HCT116 (cell line): ENCODE measurements at regions of chr7 and their contacts with region 1.

Region 1: DNA sequence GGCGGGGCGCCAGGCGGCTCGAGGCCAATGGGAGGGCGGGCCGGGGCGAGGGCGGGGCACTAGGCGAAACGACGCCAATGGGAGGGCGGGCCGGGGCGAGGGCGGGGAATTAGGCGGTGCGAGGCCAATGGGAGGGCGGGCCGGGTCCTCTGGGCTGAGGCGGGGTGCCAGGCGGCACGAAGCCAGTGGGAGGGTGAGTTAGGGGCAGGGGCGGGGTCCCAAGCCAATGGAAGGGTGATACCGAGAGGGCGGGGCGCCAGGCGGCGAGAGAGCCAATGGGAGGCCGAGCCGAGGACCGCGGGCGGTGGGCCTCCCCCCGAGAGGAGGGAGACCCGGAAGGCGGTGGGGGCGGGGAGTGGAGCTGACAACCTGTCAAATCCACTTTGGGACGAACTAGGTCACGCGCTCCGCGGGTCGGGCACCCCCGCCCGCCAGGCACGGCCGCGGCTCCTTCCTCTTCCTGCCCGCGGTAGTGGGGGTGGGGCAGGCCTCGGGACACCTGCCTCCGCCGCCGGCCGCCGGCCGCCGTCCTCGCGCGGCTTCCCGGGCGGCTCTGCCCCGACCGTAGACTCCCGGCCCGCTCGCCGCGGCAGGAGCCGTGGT is 28.0 kb upstream of the KMT2C start:
- DNase-seq: peak; percentile 96
- ATAC-seq: peak; percentile 89
- H3K4me3 ChIP-seq: peak overlapping the region; percentile 72 to 85
- H3K27ac ChIP-seq: peak overlapping the region; percentile 96
- H3K4me1 ChIP-seq: peaks cover 10 to 12% of the 10 kb centered on the region in 2 experiments
- H3K27me3 ChIP-seq: no peaks in the 10 kb centered on the region
- CTCF ChIP-seq: no peak
- POLR2A ChIP-seq: peak; percentile 16
- RAD21 ChIP-seq: no peak

Region 2: GRCh38 chr7:152366662-152367061 is 97.1 kb before region 1 on chr7:
- CTCF ChIA-PET with region 1: no interaction called
- POLR2A ChIA-PET with region 1: no interaction called
- RAD21 ChIA-PET with region 1: interaction called in 1 of 2 experiments, 10 read pairs
- intact Hi-C with region 1: no loop called
- DNase-seq: no peak
- ATAC-seq: no peak
- H3K4me3 ChIP-seq: no peak overlapping the region
- H3K27ac ChIP-seq: no peak overlapping the region
- H3K4me1 ChIP-seq: no peaks in the 10 kb centered on the region
- H3K27me3 ChIP-seq: no peaks in the 10 kb centered on the region
- CTCF ChIP-seq: no peak
- POLR2A ChIP-seq: no peak
- RAD21 ChIP-seq: no peak

Region 3: GRCh38 chr7:152436111-152436930 is 27.5 kb before region 1 on chr7:
- CTCF ChIA-PET with region 1: no interaction called
- POLR2A ChIA-PET with region 1: no interaction called
- RAD21 ChIA-PET with region 1: no interaction called
- intact Hi-C with region 1: loop called (anchors 1 kb)
- DNase-seq: peak; percentile 78
- ATAC-seq: peak; percentile 78
- H3K4me3 ChIP-seq: peak overlapping the region; percentile 42 to 58
- H3K27ac ChIP-seq: peak overlapping the region; percentile 91
- H3K4me1 ChIP-seq: peaks cover 7 to 14% of the 10 kb centered on the region in 2 experiments
- H3K27me3 ChIP-seq: no peaks in the 10 kb centered on the region
- CTCF ChIP-seq: no peak
- POLR2A ChIP-seq: peak; percentile 24
- RAD21 ChIP-seq: no peak

Region 4: DNA sequence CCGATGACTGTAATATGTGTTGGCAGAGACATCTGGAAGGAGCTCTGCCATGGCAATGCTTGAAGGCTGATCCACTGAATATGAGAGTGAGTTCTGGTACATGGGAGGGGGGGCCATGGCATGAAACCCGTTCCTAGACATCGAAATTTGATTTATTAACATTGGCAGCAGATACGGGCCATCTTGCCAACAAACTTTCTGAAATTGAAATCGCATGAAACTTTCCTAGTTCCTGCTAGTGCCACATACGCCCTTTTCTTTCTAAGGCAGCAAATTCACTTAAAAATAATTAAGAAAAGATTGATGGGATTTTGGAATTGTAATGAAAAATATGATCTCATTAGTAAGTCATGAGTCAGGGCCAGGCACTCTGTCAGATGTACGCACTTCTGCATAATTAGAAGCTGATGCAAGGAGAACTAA is 63.8 kb after region 1 on chr7:
- CTCF ChIA-PET with region 1: no interaction called
- POLR2A ChIA-PET with region 1: no interaction called
- RAD21 ChIA-PET with region 1: no interaction called
- intact Hi-C with region 1: no loop called
- DNase-seq: no peak
- ATAC-seq: no peak
- H3K4me3 ChIP-seq: no peak overlapping the region
- H3K27ac ChIP-seq: no peak overlapping the region
- H3K4me1 ChIP-seq: peaks cover 0 to under 1% of the 10 kb centered on the region in 2 experiments; a peak in 1 of 4 replicates
- H3K27me3 ChIP-seq: no peaks in the 10 kb centered on the region
- CTCF ChIP-seq: no peak
- POLR2A ChIP-seq: no peak
- RAD21 ChIP-seq: no peak

Region 5: GRCh38 chr7:152636441-152636840 is 172.6 kb after region 1 on chr7:
- CTCF ChIA-PET with region 1: no interaction called
- POLR2A ChIA-PET with region 1: no interaction called
- RAD21 ChIA-PET with region 1: no interaction called
- intact Hi-C with region 1: no loop called
- DNase-seq: no peak
- ATAC-seq: no peak
- H3K4me3 ChIP-seq: no peak overlapping the region
- H3K27ac ChIP-seq: no peak overlapping the region
- H3K4me1 ChIP-seq: no peaks in the 10 kb centered on the region
- H3K27me3 ChIP-seq: no peaks in the 10 kb centered on the region
- CTCF ChIP-seq: no peak
- POLR2A ChIP-seq: no peak
- RAD21 ChIP-seq: no peak

Region 6: DNA sequence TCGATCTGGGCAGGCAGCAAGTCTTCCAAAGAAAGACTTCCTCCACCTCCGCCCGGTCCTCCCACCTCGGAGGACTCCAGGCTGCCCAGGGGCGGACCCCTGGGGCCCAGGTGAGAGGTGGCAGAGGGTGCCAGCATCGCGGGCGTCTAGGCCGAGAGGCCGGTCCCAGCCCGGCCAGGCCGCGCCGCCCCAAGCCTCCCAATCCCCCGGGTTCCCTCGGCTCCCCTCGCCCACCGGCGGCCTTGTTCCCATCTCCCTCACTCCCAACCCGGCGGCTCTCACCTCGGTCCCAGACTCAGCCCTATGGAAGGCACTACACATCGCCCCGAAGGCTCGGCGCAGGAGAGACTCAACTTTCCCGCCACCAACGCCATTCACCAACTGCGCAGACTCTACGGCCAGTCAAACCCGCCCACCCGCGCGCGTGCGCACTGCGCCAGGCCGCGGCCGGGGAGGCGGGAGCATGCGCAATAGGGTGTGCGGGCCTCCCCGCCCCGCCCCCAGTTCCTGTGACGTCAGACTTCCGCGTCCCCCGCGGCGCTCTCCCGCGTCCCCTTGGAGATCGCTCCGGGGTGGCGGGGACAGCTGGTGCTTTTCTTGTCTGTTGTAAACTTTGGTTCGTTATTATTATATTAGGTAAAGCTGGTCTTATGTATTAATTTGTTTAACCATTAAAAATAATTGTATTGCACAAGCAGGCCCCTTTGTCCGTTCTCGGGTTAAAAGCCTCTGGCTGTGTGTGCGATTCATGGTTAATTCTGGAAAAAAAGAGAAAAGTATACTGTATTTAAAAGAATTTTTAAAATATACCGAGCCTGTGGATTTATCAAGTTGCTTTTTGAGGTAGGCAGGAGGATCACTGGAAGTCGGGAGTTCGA is 212.2 kb after region 1 on chr7 and contains the start of gene XRCC2:
- CTCF ChIA-PET with region 1: no interaction called
- POLR2A ChIA-PET with region 1: no interaction called
- RAD21 ChIA-PET with region 1: no interaction called
- intact Hi-C with region 1: loop called (anchors 10 kb)
- DNase-seq: peak; percentile 77
- ATAC-seq: peak; percentile 92
- H3K4me3 ChIP-seq: peak within 1 kb of the TSS; percentile 77 to 90
- H3K27ac ChIP-seq: peak within 1 kb of the TSS; percentile 77
- H3K4me1 ChIP-seq: peaks cover 0 to 13% of the 10 kb centered on the region in 2 experiments; a peak in 3 of 4 replicates
- H3K27me3 ChIP-seq: no peaks in the 10 kb centered on the region
- CTCF ChIP-seq: no peak
- POLR2A ChIP-seq: peak; percentile 90
- RAD21 ChIP-seq: 0 out of 2 replicates have a peak, but pooled peaks have one; percentile 14
- total RNA-seq, gene XRCC2: 14.8 TPM

Region 7: DNA sequence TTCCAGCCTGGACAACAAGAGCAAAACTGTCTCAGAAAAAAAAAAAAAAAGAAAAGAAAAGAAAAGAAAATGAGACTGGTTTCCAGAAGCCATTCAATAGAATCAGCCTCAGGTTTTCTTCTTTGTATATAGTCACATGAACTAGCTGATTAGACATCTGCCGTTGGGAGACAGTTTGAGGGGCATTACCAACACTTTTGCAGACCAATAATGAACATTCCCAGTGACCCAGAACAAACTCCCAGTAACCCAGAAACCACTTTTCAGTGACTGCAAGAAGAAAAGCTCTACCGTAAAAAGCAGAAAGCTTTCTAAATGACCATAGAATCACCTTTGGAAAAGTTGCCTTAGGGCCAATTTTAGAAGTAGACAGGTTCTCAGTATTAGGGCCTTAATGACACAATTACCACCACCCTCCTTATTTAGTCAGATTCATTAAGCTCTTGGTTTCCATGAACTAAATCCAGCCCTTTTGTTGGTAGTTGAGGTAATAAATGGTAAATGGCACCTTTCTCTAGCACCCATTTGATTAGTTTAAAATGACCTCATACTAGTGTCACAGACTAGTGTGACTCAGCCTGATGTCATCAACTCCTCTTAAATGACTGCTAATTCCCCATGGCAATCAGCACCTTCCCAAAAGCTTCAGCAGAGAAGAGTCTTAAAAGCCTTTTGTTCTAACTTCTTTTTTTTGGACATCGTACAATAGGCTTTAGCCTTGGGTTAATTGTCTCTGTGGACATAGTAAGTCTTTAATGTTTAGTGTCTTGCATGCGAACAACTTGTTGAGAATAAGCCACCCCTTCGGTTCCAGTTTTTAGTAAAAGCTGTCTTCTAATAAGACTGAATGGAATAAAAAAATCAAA is 245.7 kb after region 1 on chr7:
- CTCF ChIA-PET with region 1: no interaction called
- POLR2A ChIA-PET with region 1: interaction called, 3 read pairs
- RAD21 ChIA-PET with region 1: no interaction called
- intact Hi-C with region 1: loop called (anchors 10 kb)
- DNase-seq: peak; percentile 81
- ATAC-seq: peak; percentile 28; the same call in 1 of the 2 replicates
- H3K4me3 ChIP-seq: peak overlapping the region in 1 of 2 experiments; percentile 33; a peak in 2 of 4 replicates
- H3K27ac ChIP-seq: no peak overlapping the region; the same call in 1 of the 2 replicates
- H3K4me1 ChIP-seq: peaks cover 27 to 34% of the 10 kb centered on the region in 2 experiments
- H3K27me3 ChIP-seq: no peaks in the 10 kb centered on the region
- CTCF ChIP-seq: no peak
- POLR2A ChIP-seq: no peak
- RAD21 ChIP-seq: no peak